Gastrocnemius medialis (tissue), 4 donors: ENCODE measurements at regions of chr5 and their contacts with region 1.

Region 1: GRCh38 chr5:157994906-157995519 is 136.1 kb upstream of the CLINT1 start:
- DNase-seq: peak; percentile 24 to 25
- ATAC-seq: peak; percentile 45 to 66
- H3K4me3 ChIP-seq: no peak overlapping the region
- H3K27ac ChIP-seq: no peak overlapping the region
- H3K4me1 ChIP-seq: no peaks in the 10 kb centered on the region
- H3K27me3 ChIP-seq: no peaks in the 10 kb centered on the region
- CTCF ChIP-seq: peak in 3 of 5 experiments; percentile 35 to 58 (median 43)
- POLR2A ChIP-seq: no peak

Region 2: GRCh38 chr5:157761690-157762621 is 233.1 kb before region 1 on chr5:
- in situ Hi-C with region 1: no loop called
- intact Hi-C with region 1: loop called (anchors 2 kb)
- DNase-seq: no peak
- ATAC-seq: peak; percentile 86 to 94
- H3K4me3 ChIP-seq: no peak overlapping the region
- H3K27ac ChIP-seq: no peak overlapping the region
- H3K4me1 ChIP-seq: no peaks in the 10 kb centered on the region
- H3K27me3 ChIP-seq: no peaks in the 10 kb centered on the region
- CTCF ChIP-seq: peak; percentile 53 to 73 (median 62)
- POLR2A ChIP-seq: no peak

Region 3: DNA sequence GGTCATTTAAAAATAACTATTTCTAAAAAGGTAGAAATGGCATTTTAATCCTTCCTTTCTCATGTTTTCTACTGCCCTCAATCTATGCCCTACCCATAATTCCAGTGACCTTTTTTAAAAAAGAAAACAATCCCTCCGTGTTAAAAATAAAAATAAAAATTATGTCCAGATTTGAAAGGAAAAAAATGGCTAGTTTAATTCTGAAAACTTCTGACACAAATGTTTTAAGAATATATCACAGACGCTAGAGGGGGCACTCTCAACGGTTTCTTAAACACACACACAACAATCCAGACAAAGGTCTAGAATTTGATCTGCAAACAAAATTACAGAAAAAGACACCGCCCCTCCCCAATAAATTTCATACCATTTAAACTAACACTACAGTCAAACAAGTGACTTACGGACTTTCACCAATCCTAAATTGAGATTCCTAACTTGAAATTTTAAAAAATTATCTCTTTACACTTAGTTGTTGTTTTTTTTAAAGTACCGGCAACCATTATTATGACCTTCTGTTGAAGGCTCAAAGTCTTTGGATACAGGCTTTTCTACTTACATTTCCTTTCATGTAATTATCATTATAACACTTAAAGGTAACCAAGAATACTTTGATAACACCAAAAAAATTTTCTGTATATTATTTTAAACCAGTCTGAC is 174.3 kb before region 1 on chr5:
- in situ Hi-C with region 1: no loop called
- intact Hi-C with region 1: loop called (anchors 1 kb)
- DNase-seq: no peak
- ATAC-seq: no peak
- H3K4me3 ChIP-seq: no peak overlapping the region
- H3K27ac ChIP-seq: peak overlapping the region; percentile 39 to 55 (median 46)
- H3K4me1 ChIP-seq: peaks cover 34 to 41% of the 10 kb centered on the region in 2 donors
- H3K27me3 ChIP-seq: no peaks in the 10 kb centered on the region
- CTCF ChIP-seq: peak in 3 of 5 experiments; percentile 28 to 54 (median 44)
- POLR2A ChIP-seq: no peak